A673 (cell line): ENCODE measurements at regions of chr1 and their contacts with region 1.

Region 1: GRCh38 chr1:6409053-6409452 is 10.7 kb downstream of the HES2 start:
- DNase-seq: no peak
- H3K4me3 ChIP-seq: no peak overlapping the region
- H3K27ac ChIP-seq: no peak overlapping the region
- H3K4me1 ChIP-seq: no peaks in the 10 kb centered on the region
- H3K27me3 ChIP-seq: peaks cover 8% of the 10 kb centered on the region
- CTCF ChIP-seq: no peak

Region 2: GRCh38 chr1:5836776-5837440 is 572.1 kb before region 1 on chr1:
- CTCF ChIA-PET with region 1: no interaction called
- POLR2A ChIA-PET with region 1: no interaction called
- intact Hi-C with region 1: no loop called
- DNase-seq: no peak
- H3K4me3 ChIP-seq: no peak overlapping the region
- H3K27ac ChIP-seq: no peak overlapping the region
- H3K4me1 ChIP-seq: no peaks in the 10 kb centered on the region
- H3K27me3 ChIP-seq: no peaks in the 10 kb centered on the region
- CTCF ChIP-seq: no peak

Region 3: GRCh38 chr1:6438047-6438525 is 29.0 kb after region 1 on chr1:
- CTCF ChIA-PET with region 1: interaction called, 12 read pairs
- POLR2A ChIA-PET with region 1: no interaction called
- intact Hi-C with region 1: no loop called
- DNase-seq: peak; percentile 62
- H3K4me3 ChIP-seq: no peak overlapping the region
- H3K27ac ChIP-seq: no peak overlapping the region
- H3K4me1 ChIP-seq: no peaks in the 10 kb centered on the region
- H3K27me3 ChIP-seq: no peaks in the 10 kb centered on the region
- CTCF ChIP-seq: peak; percentile 82